A549 (cell line): ENCODE measurements at regions of chr19 and their contacts with region 1.

Region 1: GRCh38 chr19:35757749-35758608 is at the start of gene PROSER3:
- DNase-seq: peak; percentile 100
- ATAC-seq: peak; percentile 91 to 98
- H3K4me3 ChIP-seq: peak within 1 kb of the TSS; percentile 71
- H3K27ac ChIP-seq: peak within 1 kb of the TSS; percentile 87 to 93
- H3K4me1 ChIP-seq: peaks cover 25% of the 10 kb centered on the region
- CTCF ChIP-seq: no peak
- EP300 ChIP-seq: no peak; a peak in 1 of 5 replicates
- POLR2A ChIP-seq: peak; percentile 89
- RAD21 ChIP-seq: no peak
- polyA plus RNA-seq, gene PROSER3: 19.5 and 30.8 TPM in 2 replicates

Region 2: GRCh38 chr19:35797663-35798062 is 39.7 kb after region 1 on chr19:
- CTCF ChIA-PET with region 1: interaction called, 3 read pairs
- POLR2A ChIA-PET with region 1: interaction called, 10 read pairs
- DNase-seq: no peak
- ATAC-seq: peak; percentile 16 to 40; a peak in 5 of 6 replicates
- H3K4me3 ChIP-seq: no peak overlapping the region
- H3K27ac ChIP-seq: no peak overlapping the region
- H3K4me1 ChIP-seq: peaks cover 8% of the 10 kb centered on the region
- CTCF ChIP-seq: no peak
- EP300 ChIP-seq: no peak
- POLR2A ChIP-seq: no peak
- RAD21 ChIP-seq: no peak